ENCODE measurements at regions of chr13 and their contacts with region 1.

Region 1: GRCh38 chr13:112910616-112911364 is 58.2 kb upstream of the MCF2L start:
- DNase-seq: no peak
- H3K4me3 ChIP-seq: no peak overlapping the region
- H3K27ac ChIP-seq: no peak overlapping the region
- H3K4me1 ChIP-seq: no peaks in the 10 kb centered on the region
- H3K27me3 ChIP-seq: peaks cover 1% of the 10 kb centered on the region
- CTCF ChIP-seq: no peak

Region 2: DNA sequence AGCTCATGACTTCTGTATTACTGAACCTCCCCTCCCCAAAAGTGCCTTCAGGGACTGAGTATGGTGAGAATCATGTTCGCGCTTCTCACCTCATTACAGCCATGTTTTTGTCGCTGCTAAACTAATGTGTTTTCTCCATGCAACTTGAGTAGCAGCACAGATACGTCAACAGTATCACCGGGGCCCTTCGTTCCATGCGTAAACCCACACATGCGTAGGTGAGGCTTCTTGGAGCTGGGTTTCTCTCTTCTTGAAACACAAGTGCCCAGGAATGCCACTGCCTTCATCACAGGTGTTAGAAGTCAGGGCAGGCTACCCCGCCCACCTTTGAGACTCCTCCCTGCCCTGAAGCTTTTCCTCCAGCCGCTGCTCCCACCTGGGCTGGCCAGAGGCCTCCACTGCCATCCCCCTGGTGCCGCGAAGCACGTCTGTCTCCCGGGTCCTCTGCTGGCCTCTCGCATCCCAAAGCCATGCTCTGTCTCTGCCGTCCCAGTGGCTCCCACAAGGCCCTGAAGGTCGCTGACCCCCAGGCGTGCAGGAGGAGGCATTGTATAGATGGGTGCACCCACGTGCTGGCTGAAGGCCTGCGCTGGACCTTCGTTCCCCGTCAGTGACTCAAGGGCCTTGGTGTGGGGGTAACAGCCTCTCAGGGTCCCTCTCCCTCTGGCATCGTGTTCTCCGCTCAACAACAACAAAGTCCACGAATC is 77.1 kb before region 1 on chr13:
- CTCF ChIA-PET with region 1: no interaction called
- dilution Hi-C with region 1: loop called (anchors 5 kb)
- in situ Hi-C with region 1: no loop called
- intact Hi-C with region 1: no loop called
- DNase-seq: no peak
- H3K4me3 ChIP-seq: no peak overlapping the region
- H3K27ac ChIP-seq: no peak overlapping the region
- H3K4me1 ChIP-seq: no peaks in the 10 kb centered on the region
- H3K27me3 ChIP-seq: no peaks in the 10 kb centered on the region
- CTCF ChIP-seq: no peak